H1 (cell line): ENCODE measurements at regions of chr14 and their contacts with region 1.

Region 1: DNA sequence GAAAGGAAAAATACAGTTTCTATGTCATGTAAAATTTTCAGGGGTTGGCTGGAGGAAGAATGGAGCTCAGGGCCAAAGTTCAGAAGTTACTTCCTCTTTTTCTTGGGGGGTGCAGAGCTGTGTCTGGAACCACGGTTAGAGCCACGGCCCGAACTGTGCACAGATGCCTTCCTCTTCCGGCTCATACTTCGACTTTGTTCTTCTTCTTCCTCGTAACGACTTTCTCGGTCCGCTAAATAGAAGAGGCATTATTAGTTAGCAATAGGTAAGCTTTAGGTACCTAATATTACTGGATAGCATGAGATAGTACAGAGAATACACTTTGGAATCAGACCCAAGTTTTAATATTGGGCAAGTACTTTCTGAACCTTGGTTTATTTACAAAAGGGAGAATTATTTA is 31.2 kb downstream of the SUPT16H start:
- DNase-seq: no peak
- H3K4me3 ChIP-seq: no peak overlapping the region
- H3K27ac ChIP-seq: no peak overlapping the region
- H3K4me1 ChIP-seq: no peaks in the 10 kb centered on the region; a peak in 1 of 7 replicates
- H3K27me3 ChIP-seq: no peaks in the 10 kb centered on the region
- CTCF ChIP-seq: no peak
- EP300 ChIP-seq: no peak
- POLR2A ChIP-seq: no peak
- RAD21 ChIP-seq: no peak

Region 2: DNA sequence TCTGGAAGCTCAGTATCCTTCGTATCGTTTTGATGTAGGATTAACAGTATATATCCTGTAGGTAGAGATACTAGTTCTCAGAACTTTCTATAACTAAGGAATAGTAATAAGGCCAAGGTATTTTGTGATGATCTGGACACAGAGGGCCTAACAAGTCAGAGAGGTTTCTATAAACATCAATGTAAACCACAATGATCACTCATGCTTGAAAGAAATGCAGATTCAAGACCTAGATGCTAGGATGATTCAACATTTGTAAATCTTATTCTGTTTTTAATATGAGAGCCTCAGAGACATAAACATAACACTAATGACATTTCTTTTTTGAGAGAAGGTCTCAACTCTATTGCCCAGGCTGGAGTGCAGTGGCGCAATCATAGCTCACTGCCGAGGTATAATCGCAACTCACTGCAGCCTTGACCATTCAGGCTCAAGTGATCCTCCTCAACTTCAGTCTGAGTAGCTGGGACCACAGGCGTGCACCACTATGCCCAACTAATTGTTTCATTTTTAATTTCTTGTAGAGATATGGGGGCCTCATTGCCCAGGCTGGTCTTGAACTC is 15.1 kb after region 1 on chr14:
- CTCF ChIA-PET with region 1: interaction called, 3 read pairs
- POLR2A ChIA-PET with region 1: interaction called, 11 read pairs
- DNase-seq: no peak
- H3K4me3 ChIP-seq: no peak overlapping the region
- H3K27ac ChIP-seq: no peak overlapping the region
- H3K4me1 ChIP-seq: no peaks in the 10 kb centered on the region
- H3K27me3 ChIP-seq: no peaks in the 10 kb centered on the region
- CTCF ChIP-seq: no peak
- EP300 ChIP-seq: no peak
- POLR2A ChIP-seq: no peak
- RAD21 ChIP-seq: no peak